ENCODE measurements at regions of chr18 and their contacts with region 1.

Region 1: DNA sequence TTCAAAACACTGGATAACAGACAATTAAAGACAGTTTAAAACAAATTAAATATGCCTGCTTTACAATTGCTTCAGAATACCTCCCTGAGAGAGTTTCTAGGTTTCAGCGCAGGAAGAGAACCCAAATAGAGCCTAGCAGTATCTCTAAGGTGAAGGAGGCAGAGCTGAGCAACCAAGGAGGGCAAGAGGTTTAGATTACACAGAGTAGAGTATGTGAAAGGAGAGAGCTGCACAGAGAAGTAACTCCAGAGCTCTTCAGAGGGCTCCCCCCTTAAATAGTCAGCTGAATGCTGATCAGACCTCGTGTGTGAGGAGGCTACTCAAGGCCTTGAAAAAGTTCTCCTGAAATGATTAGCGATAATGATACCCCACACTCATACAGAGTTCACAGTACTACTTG is 386.5 kb upstream of the TCF4 start:
- DNase-seq: no peak
- H3K4me3 ChIP-seq: no peak overlapping the region
- H3K27ac ChIP-seq: no peak overlapping the region
- H3K4me1 ChIP-seq: no peaks in the 10 kb centered on the region
- H3K27me3 ChIP-seq: no peaks in the 10 kb centered on the region
- CTCF ChIP-seq: no peak
- POLR2A ChIP-seq: no peak

Region 2: DNA sequence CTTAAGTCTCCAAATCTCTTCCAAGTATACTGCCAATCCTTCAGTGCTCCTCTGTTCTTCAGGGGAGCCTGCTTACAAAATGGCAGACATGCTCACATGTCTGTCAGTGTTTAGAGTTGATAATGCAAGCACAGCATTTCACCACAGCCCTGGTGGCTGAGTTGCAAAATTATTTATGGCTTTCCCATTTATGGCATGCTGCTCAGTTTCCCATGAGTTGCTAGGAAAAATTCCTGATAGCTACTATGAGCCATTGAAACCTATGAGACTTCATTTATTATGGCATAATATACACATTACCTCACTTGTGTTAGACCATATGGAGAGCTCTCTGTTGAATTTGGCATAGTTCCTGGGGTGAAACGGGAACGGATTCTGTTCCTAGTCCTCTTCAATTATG is 62.2 kb after region 1 on chr18:
- intact Hi-C with region 1: loop called in 1 of 2 experiments (anchors 10 kb)
- DNase-seq: no peak
- H3K4me3 ChIP-seq: no peak overlapping the region
- H3K27ac ChIP-seq: no peak overlapping the region
- H3K4me1 ChIP-seq: no peaks in the 10 kb centered on the region
- H3K27me3 ChIP-seq: no peaks in the 10 kb centered on the region
- CTCF ChIP-seq: no peak
- POLR2A ChIP-seq: no peak

Region 3: DNA sequence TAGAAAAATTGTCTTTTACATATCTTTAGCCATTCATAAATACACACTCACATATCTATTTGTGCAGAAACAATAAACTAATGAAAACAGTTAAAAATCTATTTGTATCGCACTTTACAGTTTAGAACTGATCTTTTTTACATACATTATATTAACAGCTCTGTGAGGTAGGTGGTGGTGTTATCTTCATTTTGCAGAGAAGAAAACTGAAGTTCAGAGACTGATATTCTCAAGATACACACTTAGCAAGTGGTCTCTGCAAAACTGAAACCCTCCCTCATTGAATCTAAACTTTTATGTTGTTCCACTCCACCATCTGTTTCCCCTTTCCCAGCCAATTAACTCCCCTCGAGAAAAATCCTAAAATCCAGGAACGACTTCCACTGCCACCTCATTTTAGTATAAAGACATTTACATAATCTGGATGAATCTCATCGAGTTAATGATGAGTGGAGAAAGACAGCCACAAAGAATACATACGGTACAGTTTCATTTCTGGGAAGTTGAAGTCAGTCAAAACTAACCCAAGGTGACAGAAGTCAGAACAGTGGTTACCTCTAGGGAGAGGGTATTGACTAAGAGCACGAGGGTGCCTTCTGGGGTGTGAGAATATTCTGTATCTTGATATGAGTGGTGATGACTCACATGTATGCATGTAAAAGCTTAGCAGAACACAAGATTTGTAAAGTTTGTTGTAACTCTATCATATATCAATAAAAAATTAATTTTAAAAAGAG is 137.7 kb after region 1 on chr18:
- intact Hi-C with region 1: no loop called
- DNase-seq: no peak
- H3K4me3 ChIP-seq: no peak overlapping the region
- H3K27ac ChIP-seq: no peak overlapping the region
- H3K4me1 ChIP-seq: peaks cover 0 to 5% of the 10 kb centered on the region in 2 donors
- H3K27me3 ChIP-seq: no peaks in the 10 kb centered on the region
- CTCF ChIP-seq: no peak
- POLR2A ChIP-seq: no peak